Motor neuron (in vitro differentiated cells): ENCODE measurements at regions of chr7 and their contacts with region 1.

Region 1: DNA sequence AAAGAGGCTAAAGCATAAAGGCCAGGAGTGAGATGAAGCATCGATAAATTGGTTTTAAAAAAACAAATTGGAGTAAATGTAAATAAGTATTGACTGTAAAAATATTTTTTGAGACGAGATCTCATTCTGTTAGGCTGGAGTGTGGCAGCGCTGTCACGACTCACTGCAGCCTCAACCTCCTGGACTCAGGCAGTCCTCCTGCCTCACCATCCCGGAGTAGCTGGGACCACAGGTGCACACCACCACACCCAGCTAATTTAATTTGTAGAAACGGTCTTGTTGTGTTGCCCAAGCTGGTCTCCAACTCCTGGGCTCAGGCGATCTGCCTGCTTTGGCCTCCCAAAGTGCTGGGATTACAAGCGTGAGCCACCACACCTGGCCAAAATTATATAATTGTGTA is 17.8 kb downstream of the HNRNPA2B1 start:
- ATAC-seq: peak in 2 of 8 experiments; percentile 2 to 7
- H3K4me3 ChIP-seq: no peak overlapping the region
- H3K27ac ChIP-seq: no peak overlapping the region
- H3K4me1 ChIP-seq: no peaks in the 10 kb centered on the region

Region 2: GRCh38 chr7:26090927-26091519 is 91.7 kb before region 1 on chr7:
- in situ Hi-C with region 1: loop called in 2 of 9 experiments (anchors 5 to 25 kb)
- ATAC-seq: peak in 7 of 8 experiments; percentile 49 to 89 (median 71)
- H3K4me3 ChIP-seq: no peak overlapping the region
- H3K27ac ChIP-seq: no peak overlapping the region
- H3K4me1 ChIP-seq: no peaks in the 10 kb centered on the region